ENCODE measurements at regions of chr2 and their contacts with region 1.

Region 1: DNA sequence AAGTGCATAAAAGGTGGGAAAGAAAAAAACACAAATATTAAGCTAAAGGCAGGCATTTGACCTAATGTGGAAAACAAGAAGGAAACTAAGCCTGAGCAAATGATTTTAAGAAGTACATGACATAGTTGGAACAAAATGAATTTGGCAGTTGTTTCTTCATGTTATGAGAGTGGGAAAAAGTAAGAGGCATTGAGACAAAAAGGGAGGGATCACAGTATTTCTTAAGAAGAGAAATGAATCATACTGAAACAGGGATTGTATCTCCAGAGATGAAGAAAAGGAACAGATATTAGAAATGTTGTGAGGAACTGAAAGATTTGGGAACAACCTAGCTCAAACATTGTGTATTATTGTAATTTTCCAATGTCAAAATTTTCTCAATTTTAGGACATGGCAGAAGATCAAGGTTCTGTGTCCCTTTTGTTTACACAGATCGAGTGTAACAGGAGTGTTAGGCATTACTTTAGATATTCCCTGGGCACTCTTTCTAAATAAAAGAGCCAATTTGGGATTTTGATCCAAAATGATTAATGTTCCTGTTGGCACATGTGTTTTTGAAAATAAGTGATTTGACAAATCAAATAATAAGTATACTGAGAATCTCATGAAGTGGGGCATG is 98.6 kb downstream of the CALCRL start:
- H3K4me3 Mint-ChIP-seq: peak overlapping the region; percentile 26
- H3K27ac Mint-ChIP-seq: peak overlapping the region; percentile 86
- H3K4me1 Mint-ChIP-seq: peaks cover 16% of the 10 kb centered on the region
- H3K27me3 Mint-ChIP-seq: no peaks in the 10 kb centered on the region

Region 2: GRCh38 chr2:186687807-186688211 is 661.6 kb before region 1 on chr2:
- intact Hi-C with region 1: no loop called
- H3K4me3 Mint-ChIP-seq: no peak overlapping the region
- H3K27ac Mint-ChIP-seq: no peak overlapping the region
- H3K4me1 Mint-ChIP-seq: no peaks in the 10 kb centered on the region
- H3K27me3 Mint-ChIP-seq: peaks cover 3% of the 10 kb centered on the region

Region 3: GRCh38 chr2:187168720-187169713 is 180.4 kb before region 1 on chr2:
- intact Hi-C with region 1: loop called (anchors 5 kb)
- H3K4me3 Mint-ChIP-seq: no peak overlapping the region
- H3K27ac Mint-ChIP-seq: peak overlapping the region; percentile 81
- H3K4me1 Mint-ChIP-seq: peaks cover 30% of the 10 kb centered on the region
- H3K27me3 Mint-ChIP-seq: no peaks in the 10 kb centered on the region

Region 4: GRCh38 chr2:187422282-187422681 is 72.8 kb after region 1 on chr2:
- intact Hi-C with region 1: loop called (anchors 5 kb)
- H3K4me3 Mint-ChIP-seq: no peak overlapping the region
- H3K27ac Mint-ChIP-seq: no peak overlapping the region
- H3K4me1 Mint-ChIP-seq: peaks cover 22% of the 10 kb centered on the region
- H3K27me3 Mint-ChIP-seq: no peaks in the 10 kb centered on the region

Measured in dendritic cell treated with granulocyte-macrophage colony-stimulating factor and Interleukin-4, amounts not matched to agents 40 ng/mL and 50 ng/mL, for 4 days (primary cell).